HepG2 (cell line): ENCODE measurements at regions of chr22 and their contacts with region 1.

Region 1: GRCh38 chr22:49434101-49434611 is 393.5 kb downstream of the BRD1 start:
- DNase-seq: peak; percentile 10
- ATAC-seq: peak; percentile 93
- H3K4me3 ChIP-seq: no peak overlapping the region
- H3K27ac ChIP-seq: no peak overlapping the region
- H3K4me1 ChIP-seq: no peaks in the 10 kb centered on the region
- H3K27me3 ChIP-seq: peaks cover 2 to 51% of the 10 kb centered on the region in 2 experiments
- CTCF ChIP-seq: peak; percentile 71
- EP300 ChIP-seq: no peak
- POLR2A ChIP-seq: no peak
- RAD21 ChIP-seq: peak; percentile 54

Region 2: DNA sequence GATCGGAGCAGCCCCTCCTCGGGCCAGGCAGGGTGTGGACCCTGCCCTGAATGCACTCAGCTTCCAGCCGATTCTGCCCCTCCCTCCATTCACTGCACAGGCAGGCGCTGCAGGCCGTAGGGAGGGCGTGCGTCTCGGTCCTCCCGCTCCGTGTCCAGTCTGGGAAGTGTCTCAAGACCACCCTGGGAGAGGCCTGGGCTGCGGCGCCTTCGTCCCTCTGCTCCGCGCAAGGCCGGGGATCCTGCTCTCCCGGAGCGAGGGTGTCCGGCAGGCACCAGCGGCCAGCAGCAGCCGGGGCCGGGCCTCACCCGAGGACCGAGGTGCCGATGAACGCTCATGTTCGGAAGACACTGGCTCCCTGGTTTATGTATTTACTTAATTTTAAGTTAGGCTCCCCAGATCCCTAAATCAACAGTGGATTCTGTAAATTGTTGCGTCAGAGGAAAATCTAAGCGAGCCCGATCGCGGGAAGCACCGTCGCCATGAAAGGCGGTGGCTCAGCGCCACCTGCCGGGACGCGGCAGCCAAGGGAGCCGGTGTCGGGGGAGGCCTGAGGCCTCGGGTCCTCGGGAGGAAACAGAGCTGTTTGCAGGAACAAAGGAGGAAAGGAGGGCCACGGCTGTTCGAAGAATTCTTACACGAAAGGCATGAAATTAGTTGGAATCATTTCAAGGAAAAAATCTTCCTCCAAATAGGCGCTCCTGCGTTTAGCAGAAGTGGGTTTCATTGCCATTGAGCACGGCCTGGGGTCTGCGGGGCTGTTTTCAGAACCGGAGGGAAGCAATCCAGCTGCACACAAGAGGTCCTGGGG is 198.2 kb after region 1 on chr22:
- CTCF ChIA-PET with region 1: interaction called, 31 read pairs
- POLR2A ChIA-PET with region 1: no interaction called
- in situ Hi-C with region 1: loop called (anchors 5 kb)
- intact Hi-C with region 1: loop called (anchors 1 kb)
- DNase-seq: peak; percentile 27
- ATAC-seq: peak; percentile 84
- H3K4me3 ChIP-seq: peak overlapping the region; percentile 21 to 66 (median 45); a peak in 5 of 6 replicates
- H3K27ac ChIP-seq: no peak overlapping the region
- H3K4me1 ChIP-seq: 0 out of 2 replicates have a peak, but pooled peaks cover 5% of the 10 kb centered on the region
- H3K27me3 ChIP-seq: peaks cover 9 to 70% of the 10 kb centered on the region in 2 experiments
- CTCF ChIP-seq: peak; percentile 91
- EP300 ChIP-seq: no peak
- POLR2A ChIP-seq: no peak
- RAD21 ChIP-seq: peak; percentile 87

Region 3: GRCh38 chr22:49724893-49725474 is 290.8 kb after region 1 on chr22:
- CTCF ChIA-PET with region 1: no interaction called
- POLR2A ChIA-PET with region 1: no interaction called
- in situ Hi-C with region 1: no loop called
- intact Hi-C with region 1: loop called (anchors 10 kb)
- DNase-seq: peak; percentile 15
- ATAC-seq: peak; percentile 96
- H3K4me3 ChIP-seq: no peak overlapping the region
- H3K27ac ChIP-seq: no peak overlapping the region
- H3K4me1 ChIP-seq: no peaks in the 10 kb centered on the region
- H3K27me3 ChIP-seq: peaks cover 17 to 73% of the 10 kb centered on the region in 2 experiments
- CTCF ChIP-seq: peak; percentile 86
- EP300 ChIP-seq: no peak
- POLR2A ChIP-seq: no peak
- RAD21 ChIP-seq: peak; percentile 65